ENCODE measurements at regions of chr1 and their contacts with region 1.

Region 1: GRCh38 chr1:181424786-181425403 is 58.4 kb upstream of the CACNA1E start:
- DNase-seq: peak; percentile 72 to 91 (median 76)
- ATAC-seq: peak; percentile 75
- H3K4me3 ChIP-seq: no peak overlapping the region
- H3K4me3 Mint-ChIP-seq: peak overlapping the region; percentile 68
- H3K27ac ChIP-seq: no peak overlapping the region
- H3K27ac Mint-ChIP-seq: peak overlapping the region; percentile 15
- H3K4me1 ChIP-seq: peaks cover 22% of the 10 kb centered on the region
- H3K4me1 Mint-ChIP-seq: peaks cover 11% of the 10 kb centered on the region
- H3K27me3 ChIP-seq: no peaks in the 10 kb centered on the region
- H3K27me3 Mint-ChIP-seq: peaks cover 38% of the 10 kb centered on the region
- CTCF ChIP-seq: peak; percentile 99

Region 2: GRCh38 chr1:180579961-180580611 is 844.8 kb before region 1 on chr1:
- CTCF ChIA-PET with region 1: no interaction called
- POLR2A ChIA-PET with region 1: no interaction called
- intact Hi-C with region 1: no loop called
- DNase-seq: no peak
- ATAC-seq: no peak
- H3K4me3 ChIP-seq: no peak overlapping the region
- H3K4me3 Mint-ChIP-seq: no peak overlapping the region
- H3K27ac ChIP-seq: no peak overlapping the region
- H3K27ac Mint-ChIP-seq: no peak overlapping the region
- H3K4me1 ChIP-seq: no peaks in the 10 kb centered on the region
- H3K4me1 Mint-ChIP-seq: no peaks in the 10 kb centered on the region
- H3K27me3 ChIP-seq: peaks cover 0 to 3% of the 10 kb centered on the region in 2 experiments
- H3K27me3 Mint-ChIP-seq: peaks cover 23% of the 10 kb centered on the region
- CTCF ChIP-seq: no peak

Region 3: DNA sequence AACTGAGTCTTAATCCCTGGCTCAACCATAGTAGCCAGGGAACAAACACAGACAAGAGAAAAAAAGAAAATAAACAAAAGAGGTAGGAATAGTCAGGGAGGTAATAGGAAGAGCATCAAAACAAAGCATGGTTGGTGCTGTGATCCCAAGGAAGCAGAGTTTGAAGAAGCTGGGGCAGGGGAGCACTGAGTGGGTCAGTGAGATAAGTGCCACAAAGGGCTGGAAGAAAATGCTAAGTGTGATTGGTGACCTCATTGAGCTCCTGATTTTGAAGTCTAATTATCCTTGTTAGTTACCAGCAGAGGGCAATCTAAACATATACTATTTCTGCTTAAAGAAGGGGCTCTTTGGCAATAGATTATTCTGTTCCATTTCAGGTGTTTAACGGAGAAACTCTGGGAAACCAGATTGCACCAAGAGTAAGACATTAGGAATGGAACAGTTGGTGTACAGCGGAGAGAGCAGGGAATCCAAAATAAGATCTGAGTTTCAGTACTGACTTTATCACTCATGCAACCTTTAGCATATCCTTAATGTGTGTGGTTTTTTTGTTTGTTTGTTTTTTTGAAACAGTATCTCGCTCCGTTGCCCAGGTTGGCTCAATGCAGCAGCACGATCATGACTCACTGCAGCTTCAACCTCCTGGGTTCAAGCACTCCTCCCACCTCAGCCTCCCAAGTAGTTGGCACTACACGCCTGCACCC is 542.9 kb before region 1 on chr1:
- CTCF ChIA-PET with region 1: no interaction called
- POLR2A ChIA-PET with region 1: no interaction called
- intact Hi-C with region 1: loop called in 1 of 2 experiments (anchors 10 kb)
- DNase-seq: peak in 2 of 14 experiments; percentile 8 to 22
- ATAC-seq: no peak
- H3K4me3 ChIP-seq: no peak overlapping the region
- H3K4me3 Mint-ChIP-seq: no peak overlapping the region
- H3K27ac ChIP-seq: no peak overlapping the region
- H3K27ac Mint-ChIP-seq: no peak overlapping the region
- H3K4me1 ChIP-seq: no peaks in the 10 kb centered on the region
- H3K4me1 Mint-ChIP-seq: no peaks in the 10 kb centered on the region
- H3K27me3 ChIP-seq: no peaks in the 10 kb centered on the region
- H3K27me3 Mint-ChIP-seq: no peaks in the 10 kb centered on the region
- CTCF ChIP-seq: no peak

Region 4: DNA sequence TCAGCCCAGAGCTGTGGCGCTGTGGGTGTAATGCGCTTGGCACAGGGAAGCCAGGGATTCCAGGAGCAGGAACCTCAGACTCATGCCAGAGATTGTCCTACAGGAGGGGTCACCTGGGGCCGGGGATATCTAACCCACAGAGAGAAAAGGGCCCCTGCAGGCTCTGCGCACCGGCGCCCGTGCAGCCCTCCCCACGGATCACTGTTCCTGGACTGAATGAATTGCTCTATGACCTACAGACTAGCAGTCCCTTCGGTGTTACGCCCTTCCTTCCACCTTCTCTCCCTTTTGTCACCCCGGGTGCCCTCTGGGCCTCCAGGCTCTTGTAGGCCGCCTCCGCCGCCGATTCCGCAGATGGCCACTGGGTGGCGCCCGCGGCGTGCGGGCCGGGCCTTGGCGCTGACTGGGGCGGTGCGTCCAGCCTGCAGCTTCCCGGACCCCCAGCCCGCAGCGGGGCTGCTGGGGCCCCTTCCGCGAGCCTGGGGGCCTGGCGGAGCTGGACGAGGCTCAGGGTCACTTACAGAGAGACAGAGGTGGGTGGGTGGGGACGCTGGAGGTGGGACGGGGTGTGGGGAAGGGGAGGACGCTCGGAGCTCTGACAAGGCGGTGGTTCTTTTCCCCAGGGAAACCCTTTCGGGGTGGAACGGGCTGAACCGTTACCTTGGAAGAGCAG is 235.1 kb before region 1 on chr1:
- CTCF ChIA-PET with region 1: interaction called, 54 read pairs
- POLR2A ChIA-PET with region 1: interaction called, 4 read pairs
- intact Hi-C with region 1: loop called (anchors 1 kb)
- DNase-seq: peak; percentile 35 to 85 (median 73)
- ATAC-seq: peak; percentile 96
- H3K4me3 ChIP-seq: peak overlapping the region; percentile 20
- H3K4me3 Mint-ChIP-seq: peak overlapping the region; percentile 34
- H3K27ac ChIP-seq: no peak overlapping the region
- H3K27ac Mint-ChIP-seq: no peak overlapping the region
- H3K4me1 ChIP-seq: peaks cover 12% of the 10 kb centered on the region
- H3K4me1 Mint-ChIP-seq: no peaks in the 10 kb centered on the region
- H3K27me3 ChIP-seq: no peaks in the 10 kb centered on the region
- H3K27me3 Mint-ChIP-seq: peaks cover 26% of the 10 kb centered on the region
- CTCF ChIP-seq: peak; percentile 94

Region 5: DNA sequence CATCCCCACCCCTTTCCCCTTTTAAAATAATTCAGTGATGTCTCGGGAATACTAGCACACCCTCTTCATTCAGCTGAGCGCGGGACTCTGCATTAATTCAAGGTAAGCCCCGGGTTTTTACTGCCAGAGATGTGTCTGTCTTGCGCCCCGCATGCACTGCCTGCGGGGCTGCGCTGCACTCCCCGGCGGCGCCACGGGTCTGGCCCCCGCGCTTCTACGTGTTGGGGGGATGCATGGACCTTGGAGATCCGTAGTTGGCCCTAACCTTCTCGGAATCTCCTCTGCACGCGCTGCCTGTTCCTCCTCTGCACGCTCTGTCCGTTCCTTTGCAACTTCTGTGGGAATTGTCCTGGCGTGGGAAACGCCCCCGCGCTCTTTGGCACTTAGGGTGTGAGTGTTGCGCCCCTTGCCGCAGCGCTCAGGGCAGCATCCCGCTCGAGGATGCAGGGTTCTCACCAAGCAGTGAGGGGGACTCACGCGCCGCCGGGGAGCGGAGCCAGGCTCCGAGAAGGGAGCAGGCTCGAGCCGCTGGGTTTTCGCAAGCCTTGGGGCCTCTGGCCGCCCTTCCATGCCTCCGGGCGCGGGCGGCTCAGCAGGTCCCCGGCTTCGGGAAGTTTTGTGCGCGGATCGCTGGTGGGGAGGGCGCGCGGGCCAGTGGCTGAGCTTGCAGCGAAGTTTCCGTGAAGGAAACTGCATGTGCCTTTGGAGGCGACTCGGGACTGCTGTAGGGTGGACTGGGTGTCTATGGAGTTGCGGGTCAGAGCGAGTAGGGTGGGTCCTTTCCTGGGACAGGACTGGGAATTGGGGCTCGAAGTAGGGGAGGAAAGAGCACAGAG is 106.7 kb before region 1 on chr1:
- CTCF ChIA-PET with region 1: interaction called, 7 read pairs
- POLR2A ChIA-PET with region 1: no interaction called
- intact Hi-C with region 1: loop called (anchors 1 to 5 kb)
- DNase-seq: peak in 3 of 14 experiments; percentile 19 to 21 (median 20)
- ATAC-seq: peak; percentile 46
- H3K4me3 ChIP-seq: peak overlapping the region; percentile 28
- H3K4me3 Mint-ChIP-seq: peak overlapping the region; percentile 85
- H3K27ac ChIP-seq: no peak overlapping the region
- H3K27ac Mint-ChIP-seq: no peak overlapping the region
- H3K4me1 ChIP-seq: peaks cover 24% of the 10 kb centered on the region
- H3K4me1 Mint-ChIP-seq: peaks cover 18% of the 10 kb centered on the region
- H3K27me3 ChIP-seq: peaks cover 54 to 57% of the 10 kb centered on the region in 2 experiments
- H3K27me3 Mint-ChIP-seq: peaks cover 65% of the 10 kb centered on the region
- CTCF ChIP-seq: no peak

Region 6: DNA sequence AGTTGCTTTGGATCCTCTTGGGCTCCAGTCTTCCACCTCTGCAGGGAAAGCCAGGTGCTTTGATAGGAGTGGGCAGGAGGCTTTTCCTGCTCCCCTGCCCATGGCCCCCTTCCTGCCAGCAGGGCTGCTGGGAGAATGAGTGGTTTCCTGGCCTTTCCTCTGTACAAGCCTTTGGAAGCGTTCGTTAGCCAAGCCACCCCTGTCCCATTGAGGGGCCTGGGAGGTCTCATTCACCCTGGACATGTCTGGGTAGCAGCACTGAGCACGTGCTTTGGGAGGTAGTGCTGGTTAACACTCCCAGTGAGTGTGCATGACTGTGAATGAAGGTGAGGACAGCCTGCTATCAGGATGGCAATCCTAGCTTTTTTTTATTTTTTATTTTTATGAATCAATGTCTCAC is 60.1 kb before region 1 on chr1:
- CTCF ChIA-PET with region 1: interaction called, 4 read pairs
- POLR2A ChIA-PET with region 1: no interaction called
- intact Hi-C with region 1: loop called in 1 of 2 experiments (anchors 5 kb)
- DNase-seq: no peak
- ATAC-seq: no peak
- H3K4me3 ChIP-seq: no peak overlapping the region
- H3K4me3 Mint-ChIP-seq: no peak overlapping the region
- H3K27ac ChIP-seq: no peak overlapping the region
- H3K27ac Mint-ChIP-seq: no peak overlapping the region
- H3K4me1 ChIP-seq: no peaks in the 10 kb centered on the region
- H3K4me1 Mint-ChIP-seq: no peaks in the 10 kb centered on the region
- H3K27me3 ChIP-seq: no peaks in the 10 kb centered on the region
- H3K27me3 Mint-ChIP-seq: no peaks in the 10 kb centered on the region
- CTCF ChIP-seq: no peak

Region 7: GRCh38 chr1:181397845-181398244 is 27.1 kb before region 1 on chr1:
- CTCF ChIA-PET with region 1: interaction called, 10 read pairs
- POLR2A ChIA-PET with region 1: interaction called, 3 read pairs
- intact Hi-C with region 1: loop called in 1 of 2 experiments (anchors 1 kb)
- DNase-seq: peak in 10 of 14 experiments; percentile 7 to 75 (median 18)
- ATAC-seq: peak; percentile 17
- H3K4me3 ChIP-seq: no peak overlapping the region
- H3K4me3 Mint-ChIP-seq: peak overlapping the region; percentile 47
- H3K27ac ChIP-seq: peak overlapping the region; percentile 33 to 66
- H3K27ac Mint-ChIP-seq: no peak overlapping the region
- H3K4me1 ChIP-seq: peaks cover 69% of the 10 kb centered on the region
- H3K4me1 Mint-ChIP-seq: peaks cover 51% of the 10 kb centered on the region
- H3K27me3 ChIP-seq: no peaks in the 10 kb centered on the region
- H3K27me3 Mint-ChIP-seq: no peaks in the 10 kb centered on the region
- CTCF ChIP-seq: no peak

Region 8: DNA sequence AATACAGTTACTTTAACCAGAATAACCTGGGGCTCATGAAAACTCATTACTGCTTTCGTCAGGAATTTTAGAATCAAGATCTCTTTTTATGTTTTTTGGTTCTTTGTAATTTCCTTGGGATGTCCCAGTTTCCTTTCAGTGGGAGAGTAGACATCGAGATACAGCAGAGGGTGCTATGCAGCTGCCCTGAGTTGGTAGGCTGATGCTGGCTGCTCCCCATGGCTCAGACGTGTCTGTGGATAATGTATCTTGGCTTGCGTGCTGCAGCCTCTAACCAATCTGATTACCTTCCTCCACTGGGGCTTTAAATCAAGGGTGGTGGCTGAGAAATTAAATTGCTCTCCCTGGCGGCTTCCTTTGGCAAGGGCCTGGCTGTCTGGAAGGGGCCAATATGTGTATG is 312.2 kb after region 1 on chr1:
- CTCF ChIA-PET with region 1: no interaction called
- POLR2A ChIA-PET with region 1: no interaction called
- intact Hi-C with region 1: no loop called
- DNase-seq: no peak
- ATAC-seq: no peak
- H3K4me3 ChIP-seq: no peak overlapping the region
- H3K4me3 Mint-ChIP-seq: no peak overlapping the region
- H3K27ac ChIP-seq: no peak overlapping the region
- H3K27ac Mint-ChIP-seq: no peak overlapping the region
- H3K4me1 ChIP-seq: no peaks in the 10 kb centered on the region
- H3K4me1 Mint-ChIP-seq: no peaks in the 10 kb centered on the region
- H3K27me3 ChIP-seq: no peaks in the 10 kb centered on the region
- H3K27me3 Mint-ChIP-seq: no peaks in the 10 kb centered on the region
- CTCF ChIP-seq: no peak

Measured in CD4-positive, alpha-beta T cell (primary cell).